ENCODE measurements at regions of chr2 and their contacts with region 1.

Region 1: DNA sequence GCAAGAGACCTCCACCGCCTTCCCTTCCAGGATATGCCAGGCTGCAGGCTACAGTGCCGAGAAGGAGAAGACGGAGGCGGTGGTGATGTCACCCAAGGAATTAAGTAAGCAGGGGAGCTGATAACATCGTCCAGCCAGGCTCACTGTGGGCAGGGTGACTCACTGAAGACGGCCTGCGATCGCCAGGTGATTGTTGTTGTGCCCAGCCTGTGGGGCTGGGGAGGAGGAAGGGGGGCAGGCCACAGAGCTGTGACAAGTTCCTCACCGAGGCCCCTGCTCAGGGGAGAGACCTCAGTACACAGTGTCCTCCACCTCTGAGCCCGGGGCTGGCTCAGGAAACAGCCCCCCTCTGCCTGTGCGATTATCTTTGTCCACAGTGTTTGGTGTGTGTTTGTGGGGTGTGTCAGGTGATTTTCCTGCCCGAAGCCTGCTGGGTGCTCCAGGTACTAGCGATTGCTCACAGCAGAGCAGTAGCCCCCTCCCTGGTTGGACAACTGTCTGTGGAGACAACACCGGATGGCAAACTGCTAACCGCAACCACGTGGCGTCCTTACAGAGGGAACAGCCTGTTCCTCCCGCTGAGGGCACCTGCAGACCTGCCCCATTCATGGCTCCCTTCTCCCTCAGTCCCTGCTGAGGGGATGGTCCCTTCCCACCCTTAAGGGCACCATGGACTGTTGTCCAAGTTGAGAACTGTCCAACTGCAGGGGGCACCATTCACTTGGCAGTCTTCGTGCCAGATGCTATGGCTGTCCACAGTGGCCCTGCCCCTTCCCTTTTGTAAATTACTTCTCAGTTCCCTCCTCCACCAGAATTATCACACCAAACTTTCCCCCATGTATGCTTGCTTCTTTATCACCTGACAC is 95.1 kb downstream of the ZFP36L2 start:
- DNase-seq: peak; percentile 95
- ATAC-seq: peak; percentile 50
- H3K4me3 Mint-ChIP-seq: peak overlapping the region; percentile 39
- H3K27ac Mint-ChIP-seq: peak overlapping the region; percentile 95
- H3K4me1 Mint-ChIP-seq: peaks cover 85% of the 10 kb centered on the region
- H3K27me3 Mint-ChIP-seq: no peaks in the 10 kb centered on the region
- CTCF ChIP-seq: peak; percentile 70

Region 2: DNA sequence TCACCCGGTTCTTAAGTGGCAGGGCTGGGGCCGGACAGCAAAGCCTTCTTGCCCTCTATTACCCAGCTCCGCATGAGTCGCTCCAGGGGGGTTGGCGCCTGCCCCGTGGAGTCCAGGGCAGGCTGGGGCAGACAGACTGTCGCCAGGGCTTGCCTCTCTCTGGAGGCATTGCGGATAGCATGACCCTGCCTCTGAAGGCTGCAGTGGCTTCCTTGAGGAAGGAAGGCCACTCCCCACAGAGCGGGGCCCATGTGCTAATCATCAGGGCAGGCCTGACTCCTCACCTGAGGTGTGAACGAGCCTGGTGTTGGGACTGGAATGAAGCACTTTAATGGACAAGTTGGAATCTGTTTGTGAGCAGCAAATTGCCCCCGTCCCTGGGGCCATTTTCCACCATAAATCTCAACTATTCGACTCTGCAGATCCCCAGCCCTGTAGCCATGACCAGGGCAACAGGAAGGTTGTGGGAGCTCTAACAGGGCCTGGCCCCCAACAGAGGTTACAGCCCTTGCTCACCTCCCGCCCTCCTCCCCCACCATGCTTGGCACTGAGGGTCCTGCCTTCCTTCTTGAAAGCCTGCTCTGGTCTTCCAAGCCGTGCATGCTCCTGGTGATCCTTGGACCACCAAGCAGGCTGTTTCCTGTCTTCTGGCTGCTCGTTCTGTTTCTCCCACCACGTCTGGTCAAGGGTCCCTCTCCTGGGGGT is 193.9 kb before region 1 on chr2:
- CTCF ChIA-PET with region 1: no interaction called
- POLR2A ChIA-PET with region 1: no interaction called
- intact Hi-C with region 1: no loop called
- DNase-seq: no peak
- ATAC-seq: no peak
- H3K4me3 Mint-ChIP-seq: no peak overlapping the region
- H3K27ac Mint-ChIP-seq: no peak overlapping the region
- H3K4me1 Mint-ChIP-seq: no peaks in the 10 kb centered on the region
- H3K27me3 Mint-ChIP-seq: no peaks in the 10 kb centered on the region
- CTCF ChIP-seq: no peak

Region 3: GRCh38 chr2:43059183-43059897 is 71.9 kb before region 1 on chr2:
- CTCF ChIA-PET with region 1: no interaction called
- POLR2A ChIA-PET with region 1: no interaction called
- intact Hi-C with region 1: loop called (anchors 5 kb)
- DNase-seq: peak; percentile 89
- ATAC-seq: peak; percentile 95
- H3K4me3 Mint-ChIP-seq: no peak overlapping the region
- H3K27ac Mint-ChIP-seq: peak overlapping the region; percentile 79
- H3K4me1 Mint-ChIP-seq: peaks cover 30% of the 10 kb centered on the region
- H3K27me3 Mint-ChIP-seq: no peaks in the 10 kb centered on the region
- CTCF ChIP-seq: no peak

Region 4: DNA sequence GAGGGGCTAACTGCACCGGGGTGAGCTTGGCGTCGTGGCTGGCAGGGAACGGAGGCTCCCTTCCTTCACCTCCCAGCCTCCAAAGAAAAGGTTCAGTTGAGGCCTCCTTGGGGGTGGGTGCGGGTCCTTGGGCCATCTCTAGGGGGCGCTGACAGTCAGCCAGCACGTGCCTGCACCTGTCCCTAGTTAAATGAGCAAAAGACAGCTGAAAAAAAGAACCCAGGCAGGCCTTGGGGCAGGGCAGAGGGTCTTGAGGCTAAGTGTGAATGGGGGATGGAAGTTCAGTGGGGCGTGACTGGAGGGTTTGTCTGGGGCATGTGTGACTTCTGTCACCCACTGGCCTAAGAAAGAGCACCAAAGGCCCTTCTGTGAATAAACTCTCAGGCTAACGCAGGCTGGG is 38.7 kb after region 1 on chr2:
- CTCF ChIA-PET with region 1: interaction called, 23 read pairs
- POLR2A ChIA-PET with region 1: interaction called, 14 read pairs
- intact Hi-C with region 1: loop called (anchors 5 kb)
- DNase-seq: peak; percentile 74
- ATAC-seq: no peak
- H3K4me3 Mint-ChIP-seq: peak overlapping the region; percentile 54
- H3K27ac Mint-ChIP-seq: peak overlapping the region; percentile 94
- H3K4me1 Mint-ChIP-seq: peaks cover 73% of the 10 kb centered on the region
- H3K27me3 Mint-ChIP-seq: no peaks in the 10 kb centered on the region
- CTCF ChIP-seq: peak; percentile 88

Region 5: GRCh38 chr2:43194121-43194869 is 63.0 kb after region 1 on chr2:
- CTCF ChIA-PET with region 1: interaction called, 14 read pairs
- POLR2A ChIA-PET with region 1: interaction called, 5 read pairs
- intact Hi-C with region 1: loop called (anchors 2 kb)
- DNase-seq: no peak
- ATAC-seq: no peak
- H3K4me3 Mint-ChIP-seq: peak overlapping the region; percentile 67
- H3K27ac Mint-ChIP-seq: peak overlapping the region; percentile 87
- H3K4me1 Mint-ChIP-seq: peaks cover 56% of the 10 kb centered on the region
- H3K27me3 Mint-ChIP-seq: no peaks in the 10 kb centered on the region
- CTCF ChIP-seq: no peak

Region 6: DNA sequence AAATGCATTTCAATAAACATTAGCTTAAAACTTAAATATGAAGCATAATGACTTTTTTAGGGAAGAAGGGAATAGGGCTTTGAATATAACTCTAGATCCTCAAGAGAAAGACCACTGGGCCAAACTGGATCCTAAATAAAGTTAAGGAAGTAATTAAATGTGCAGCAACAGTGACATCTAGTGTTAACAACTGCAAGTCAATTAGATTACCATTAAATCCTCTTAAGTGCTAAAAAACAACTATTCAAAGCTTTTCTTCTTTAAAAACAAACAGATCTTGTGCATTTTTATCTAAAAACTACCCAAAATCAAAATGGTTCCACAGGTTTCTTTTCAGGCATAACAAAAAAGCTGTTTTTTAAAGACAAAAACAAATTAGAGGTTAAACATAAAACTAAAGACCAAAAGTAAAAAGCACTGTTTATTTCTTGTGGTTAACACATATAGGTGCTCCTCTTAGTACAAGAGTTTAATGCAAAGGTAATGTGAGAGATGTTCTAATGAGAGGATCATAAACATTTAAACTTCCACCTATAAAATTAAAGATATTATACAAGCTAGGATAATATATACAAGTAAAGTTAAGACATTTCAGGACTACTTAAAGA is 353.2 kb after region 1 on chr2:
- CTCF ChIA-PET with region 1: interaction called, 14 read pairs
- POLR2A ChIA-PET with region 1: no interaction called
- intact Hi-C with region 1: loop called (anchors 2 kb)
- DNase-seq: no peak
- ATAC-seq: peak; percentile 61
- H3K4me3 Mint-ChIP-seq: no peak overlapping the region
- H3K27ac Mint-ChIP-seq: no peak overlapping the region
- H3K4me1 Mint-ChIP-seq: peaks cover 6% of the 10 kb centered on the region
- H3K27me3 Mint-ChIP-seq: no peaks in the 10 kb centered on the region
- CTCF ChIP-seq: peak; percentile 82